Head of caudate nucleus (tissue), 42 donors: ENCODE measurements at regions of chr17 and their contacts with region 1.

Region 1: GRCh38 chr17:48024937-48025906 is 12.4 kb downstream of the COPZ2 start:
- DNase-seq: peak; percentile 97 to 100 (median 98)

Region 2: GRCh38 chr17:47615766-47616424 is 409.3 kb before region 1 on chr17:
- intact Hi-C with region 1: no loop called
- DNase-seq: peak in 1 of 42 donors; percentile 15

Region 3: DNA sequence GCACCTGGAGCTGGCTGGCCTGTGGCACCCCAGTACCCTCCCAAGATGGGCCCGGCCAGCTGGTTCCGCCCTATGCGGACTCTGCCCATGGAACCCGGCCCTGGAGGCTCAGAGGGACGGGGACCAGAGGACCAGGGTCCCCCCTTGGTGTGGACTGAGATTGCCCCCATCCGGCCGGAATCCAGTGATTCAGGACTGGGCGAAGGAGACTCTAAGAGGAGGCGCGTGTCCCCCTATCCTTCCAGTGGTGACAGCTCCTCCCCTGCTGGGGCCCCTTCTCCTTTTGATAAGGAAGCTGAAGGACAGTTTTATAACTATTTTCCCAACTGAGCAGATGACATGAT is 280.2 kb before region 1 on chr17:
- intact Hi-C with region 1: no loop called
- DNase-seq: no peak

Region 4: DNA sequence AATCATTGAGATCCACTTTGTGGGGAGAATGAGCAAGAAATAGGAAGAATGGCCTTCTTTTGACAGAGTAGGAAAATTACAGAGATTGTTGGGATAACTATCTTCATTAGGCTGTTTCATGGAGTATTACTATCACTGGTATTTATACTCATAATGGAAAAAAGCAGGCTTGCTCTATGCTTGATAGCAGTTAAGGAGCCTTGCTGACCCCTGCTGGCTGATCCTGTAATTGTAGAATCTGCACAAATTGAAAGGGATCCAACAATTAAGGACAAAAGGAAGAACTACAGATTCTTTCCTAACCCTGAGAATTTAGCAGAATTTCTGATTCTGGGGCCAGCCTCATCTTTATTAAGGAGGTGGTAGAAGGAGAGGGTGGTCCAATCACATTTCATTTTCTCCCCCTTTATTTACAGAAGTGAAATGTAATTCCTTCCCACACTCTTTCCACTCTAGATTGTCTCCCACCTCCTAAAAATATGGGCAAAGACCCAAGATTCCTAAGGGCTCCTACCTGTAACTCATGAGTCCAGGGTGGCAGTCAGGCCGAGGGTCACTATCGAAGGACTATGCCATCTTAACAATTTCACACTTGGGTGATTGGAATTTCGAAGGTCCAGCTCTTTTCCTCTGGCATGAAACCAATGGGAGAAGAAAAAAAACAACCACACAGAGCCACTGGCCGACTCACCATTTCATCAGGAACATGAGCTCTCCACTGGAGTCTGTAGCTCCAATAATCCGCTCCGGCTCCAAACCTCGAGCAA is 49.3 kb after region 1 on chr17:
- intact Hi-C with region 1: loop called (anchors 2 kb)
- DNase-seq: peak; percentile 24 to 94 (median 82)

Region 5: GRCh38 chr17:48131216-48131824 is 106.1 kb after region 1 on chr17:
- intact Hi-C with region 1: loop called (anchors 2 kb)
- DNase-seq: peak in 34 of 42 donors; percentile 31 to 90 (median 68)

Region 6: DNA sequence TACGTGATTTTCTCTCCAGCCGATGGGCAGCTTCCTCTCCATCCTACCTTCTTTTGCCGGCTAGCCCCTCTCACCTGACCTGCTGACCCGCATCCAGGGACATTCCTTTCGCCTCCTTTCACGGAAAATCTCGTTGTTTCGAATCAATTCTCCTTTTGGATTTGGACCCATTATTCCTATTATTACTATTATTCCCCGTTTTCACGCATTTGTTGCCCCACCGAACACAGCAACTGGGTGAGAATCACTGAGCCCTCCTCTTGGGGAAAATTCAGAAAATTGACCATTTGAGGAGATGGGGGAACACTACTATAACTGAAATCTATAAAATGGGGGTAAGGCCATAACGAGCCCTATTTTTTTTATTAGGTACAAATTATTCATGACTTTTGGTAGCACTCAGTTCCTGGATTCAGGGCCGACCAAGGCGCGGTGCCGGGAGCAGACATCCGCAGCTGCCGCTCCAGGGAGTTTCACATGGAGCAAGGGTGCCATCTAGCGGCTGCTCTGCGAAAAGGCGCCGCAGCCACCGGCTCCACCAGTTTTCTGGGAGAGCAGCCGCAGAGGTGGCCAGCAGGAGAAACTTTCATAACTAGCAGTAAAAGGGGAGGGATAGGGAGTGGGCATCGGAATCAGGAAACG is 593.2 kb after region 1 on chr17:
- intact Hi-C with region 1: loop called (anchors 2 kb)
- DNase-seq: peak; percentile 71 to 95 (median 90)